Esophagus muscularis mucosa (tissue), 4 donors: ENCODE measurements at regions of chr2 and their contacts with region 1.

Region 1: GRCh38 chr2:127695491-127696472 is 5.5 kb upstream of the SFT2D3 start:
- DNase-seq: no peak
- H3K4me3 ChIP-seq: peak overlapping the region; percentile 44 to 60 (median 54)
- H3K27ac ChIP-seq: peak overlapping the region; percentile 20 to 65 (median 58)
- H3K4me1 ChIP-seq: peaks cover 11 to 19% (median 16%) of the 10 kb centered on the region in 4 donors
- H3K27me3 ChIP-seq: no peaks in the 10 kb centered on the region
- CTCF ChIP-seq: peak; percentile 77 to 81 (median 77)
- EP300 ChIP-seq: no peak
- POLR2A ChIP-seq: no peak

Region 2: GRCh38 chr2:127508631-127509034 is 187.1 kb before region 1 on chr2:
- intact Hi-C with region 1: loop called (anchors 5 kb)
- DNase-seq: no peak
- H3K4me3 ChIP-seq: no peak overlapping the region
- H3K27ac ChIP-seq: peak overlapping the region; percentile 24 to 80 (median 68)
- H3K4me1 ChIP-seq: peaks cover 49 to 73% (median 57%) of the 10 kb centered on the region in 4 donors
- H3K27me3 ChIP-seq: no peaks in the 10 kb centered on the region
- CTCF ChIP-seq: no peak
- EP300 ChIP-seq: no peak
- POLR2A ChIP-seq: no peak

Region 3: GRCh38 chr2:127591221-127591923 is 104.4 kb before region 1 on chr2:
- intact Hi-C with region 1: loop called (anchors 5 kb)
- DNase-seq: no peak
- H3K4me3 ChIP-seq: no peak overlapping the region
- H3K27ac ChIP-seq: no peak overlapping the region
- H3K4me1 ChIP-seq: peaks cover 0 to 8% (median 0%) of the 10 kb centered on the region in 4 donors
- H3K27me3 ChIP-seq: no peaks in the 10 kb centered on the region
- CTCF ChIP-seq: peak; percentile 86 to 95 (median 88)
- EP300 ChIP-seq: no peak
- POLR2A ChIP-seq: no peak